Mucosa of descending colon (tissue), 3 donors: ENCODE measurements at regions of chr6 and their contacts with region 1.

Region 1: GRCh38 chr6:168060521-168060931 is 18.5 kb downstream of the FRMD1 start:
- DNase-seq: peak; percentile 77 to 89 (median 89)
- ATAC-seq: peak; percentile 81
- H3K4me3 ChIP-seq: no peak overlapping the region
- H3K4me1 ChIP-seq: no peaks in the 10 kb centered on the region
- CTCF ChIP-seq: peak; percentile 58

Region 2: GRCh38 chr6:167872538-167873210 is 187.9 kb before region 1 on chr6:
- intact Hi-C with region 1: no loop called
- DNase-seq: no peak
- ATAC-seq: no peak
- H3K4me3 ChIP-seq: no peak overlapping the region
- H3K4me1 ChIP-seq: no peaks in the 10 kb centered on the region
- CTCF ChIP-seq: no peak

Region 3: DNA sequence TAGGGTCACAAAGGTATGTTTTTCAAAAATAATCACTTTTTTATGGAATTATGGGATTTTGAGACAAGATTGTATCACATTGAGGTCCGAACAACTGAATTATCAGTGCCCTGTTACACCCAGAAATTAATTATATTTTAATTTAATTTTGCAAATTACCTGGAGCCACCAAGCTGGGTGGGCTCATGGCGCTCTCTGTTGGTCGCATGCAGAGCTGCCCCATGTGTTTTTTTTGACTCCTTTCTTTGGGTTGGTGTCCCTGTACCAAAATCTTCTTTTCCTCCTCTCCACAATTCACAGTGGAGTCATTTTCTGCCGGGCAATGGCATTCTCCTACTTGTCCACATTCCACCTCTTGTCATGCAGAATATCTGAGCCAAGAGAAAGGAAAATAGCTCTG is 57.4 kb after region 1 on chr6:
- intact Hi-C with region 1: loop called in 1 of 2 experiments (anchors 5 kb)
- DNase-seq: no peak
- ATAC-seq: no peak
- H3K4me3 ChIP-seq: no peak overlapping the region
- H3K4me1 ChIP-seq: no peaks in the 10 kb centered on the region
- CTCF ChIP-seq: no peak